ENCODE measurements at regions of chr1 and their contacts with region 1.

Region 1: DNA sequence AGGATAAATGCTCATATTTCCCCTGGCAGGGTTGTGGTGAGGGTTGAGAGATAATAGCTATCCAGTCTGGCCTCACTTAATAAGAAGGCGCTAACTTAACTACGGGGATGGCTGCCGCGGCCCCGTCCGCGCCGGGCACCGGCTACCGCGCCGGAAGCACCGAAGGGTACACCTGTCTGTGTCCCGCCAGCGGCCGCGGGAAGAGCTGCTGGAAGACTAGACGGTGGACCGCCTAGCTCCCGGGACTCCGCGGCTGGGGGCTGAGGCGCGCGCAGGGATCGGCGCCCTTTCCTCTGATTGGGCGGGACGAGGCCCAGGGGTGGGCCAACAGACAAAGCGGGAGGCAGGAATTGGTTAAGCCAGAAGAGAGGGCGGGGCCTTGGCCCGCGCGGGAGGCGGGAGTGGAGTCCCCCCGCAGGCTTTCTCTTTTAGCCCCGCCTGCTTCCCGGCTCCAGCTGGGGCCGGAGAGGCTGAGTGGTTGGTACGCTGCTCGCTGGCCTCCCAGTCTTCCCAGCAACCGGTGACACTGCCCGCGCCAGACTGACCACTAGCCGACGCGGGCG is at the start of gene ZNF672:
- DNase-seq: peak; percentile 96
- H3K4me3 ChIP-seq: peak within 1 kb of the TSS; percentile 90
- H3K27ac ChIP-seq: peak within 1 kb of the TSS; percentile 98
- H3K27me3 ChIP-seq: no peaks in the 10 kb centered on the region
- CTCF ChIP-seq: no peak
- polyA plus RNA-seq, gene ZNF672: 9.1 and 10.9 TPM in 2 replicates

Region 2: GRCh38 chr1:248714248-248714647 is 123.6 kb before region 1 on chr1:
- CTCF ChIA-PET with region 1: no interaction called
- POLR2A ChIA-PET with region 1: no interaction called
- DNase-seq: no peak
- H3K4me3 ChIP-seq: no peak overlapping the region
- H3K27ac ChIP-seq: no peak overlapping the region
- H3K27me3 ChIP-seq: no peaks in the 10 kb centered on the region
- CTCF ChIP-seq: no peak

Region 3: GRCh38 chr1:248820041-248820585 is 17.8 kb before region 1 on chr1:
- CTCF ChIA-PET with region 1: no interaction called
- POLR2A ChIA-PET with region 1: interaction called, 27 read pairs
- DNase-seq: no peak
- H3K4me3 ChIP-seq: no peak overlapping the region
- H3K27ac ChIP-seq: no peak overlapping the region
- H3K27me3 ChIP-seq: no peaks in the 10 kb centered on the region
- CTCF ChIP-seq: no peak

Region 4: DNA sequence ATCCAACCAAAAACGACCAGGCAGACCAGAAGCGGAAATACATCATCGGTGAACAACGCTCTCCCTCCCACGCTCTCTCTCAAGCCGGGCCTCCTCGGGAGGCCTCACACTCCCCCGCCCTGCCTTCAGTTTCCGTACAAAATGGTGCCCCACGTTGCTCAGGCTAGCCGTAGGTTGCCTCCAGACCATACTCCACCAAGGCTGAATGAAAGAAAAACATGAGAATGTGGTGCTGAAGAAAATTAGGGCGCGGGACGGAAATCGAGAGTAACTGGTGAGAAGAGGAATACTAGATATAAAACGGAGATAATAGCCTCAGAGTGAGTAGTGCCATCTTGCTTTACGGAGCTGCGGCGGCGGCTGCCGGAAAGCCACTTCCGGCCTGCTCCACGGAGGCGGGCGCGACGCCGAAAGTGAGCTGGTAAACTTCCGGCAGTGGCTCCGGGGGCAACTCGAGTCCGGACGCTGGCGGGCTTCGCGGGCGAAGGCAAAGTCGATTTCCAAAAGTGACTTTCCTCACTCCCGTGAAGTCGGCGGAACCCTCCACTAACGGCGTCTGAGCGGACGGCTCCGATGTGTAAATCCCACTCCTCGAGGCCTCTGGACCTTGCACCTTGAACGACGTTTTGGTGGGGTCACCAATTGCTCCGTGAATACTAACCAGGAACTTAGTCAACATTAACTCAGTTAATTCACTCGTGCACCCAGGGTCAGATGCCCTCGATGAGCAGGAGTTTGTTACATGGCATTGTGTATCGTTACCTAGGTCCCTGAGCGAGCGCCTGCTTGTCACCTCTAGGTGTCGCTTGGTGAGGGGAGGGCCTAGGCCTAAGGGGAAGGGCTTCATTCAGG is 11.7 kb before region 1 on chr1 and contains the start of gene SH3BP5L:
- CTCF ChIA-PET with region 1: interaction called, 16 read pairs
- POLR2A ChIA-PET with region 1: interaction called, 27 read pairs
- DNase-seq: peak; percentile 86
- H3K4me3 ChIP-seq: peak within 1 kb of the TSS; percentile 99
- H3K27ac ChIP-seq: peak within 1 kb of the TSS; percentile 74
- H3K27me3 ChIP-seq: no peaks in the 10 kb centered on the region
- CTCF ChIP-seq: peak; percentile 65
- polyA plus RNA-seq, gene SH3BP5L: 15.3 and 16.6 TPM in 2 replicates

Region 5: GRCh38 chr1:248858891-248859889 is 21.3 kb after region 1 on chr1 and contains the start of gene ZNF692:
- CTCF ChIA-PET with region 1: interaction called, 15 read pairs
- POLR2A ChIA-PET with region 1: interaction called, 7 read pairs
- DNase-seq: peak; percentile 88
- H3K4me3 ChIP-seq: peak within 1 kb of the TSS; percentile 82
- H3K27ac ChIP-seq: peak within 1 kb of the TSS; percentile 65
- H3K27me3 ChIP-seq: no peaks in the 10 kb centered on the region
- CTCF ChIP-seq: no peak
- polyA plus RNA-seq, gene ZNF692: 12.7 and 14.6 TPM in 2 replicates

Region 6: GRCh38 chr1:248881261-248881660 is 43.4 kb after region 1 on chr1:
- CTCF ChIA-PET with region 1: no interaction called
- POLR2A ChIA-PET with region 1: no interaction called
- DNase-seq: no peak
- H3K4me3 ChIP-seq: no peak overlapping the region
- H3K27ac ChIP-seq: no peak overlapping the region
- H3K27me3 ChIP-seq: peaks cover 2% of the 10 kb centered on the region
- CTCF ChIP-seq: no peak

Measured in AG04450 (cell line).